Right ventricle myocardium inferior (tissue), 1 donor: ENCODE measurements at regions of chr17 and their contacts with region 1.

Region 1: DNA sequence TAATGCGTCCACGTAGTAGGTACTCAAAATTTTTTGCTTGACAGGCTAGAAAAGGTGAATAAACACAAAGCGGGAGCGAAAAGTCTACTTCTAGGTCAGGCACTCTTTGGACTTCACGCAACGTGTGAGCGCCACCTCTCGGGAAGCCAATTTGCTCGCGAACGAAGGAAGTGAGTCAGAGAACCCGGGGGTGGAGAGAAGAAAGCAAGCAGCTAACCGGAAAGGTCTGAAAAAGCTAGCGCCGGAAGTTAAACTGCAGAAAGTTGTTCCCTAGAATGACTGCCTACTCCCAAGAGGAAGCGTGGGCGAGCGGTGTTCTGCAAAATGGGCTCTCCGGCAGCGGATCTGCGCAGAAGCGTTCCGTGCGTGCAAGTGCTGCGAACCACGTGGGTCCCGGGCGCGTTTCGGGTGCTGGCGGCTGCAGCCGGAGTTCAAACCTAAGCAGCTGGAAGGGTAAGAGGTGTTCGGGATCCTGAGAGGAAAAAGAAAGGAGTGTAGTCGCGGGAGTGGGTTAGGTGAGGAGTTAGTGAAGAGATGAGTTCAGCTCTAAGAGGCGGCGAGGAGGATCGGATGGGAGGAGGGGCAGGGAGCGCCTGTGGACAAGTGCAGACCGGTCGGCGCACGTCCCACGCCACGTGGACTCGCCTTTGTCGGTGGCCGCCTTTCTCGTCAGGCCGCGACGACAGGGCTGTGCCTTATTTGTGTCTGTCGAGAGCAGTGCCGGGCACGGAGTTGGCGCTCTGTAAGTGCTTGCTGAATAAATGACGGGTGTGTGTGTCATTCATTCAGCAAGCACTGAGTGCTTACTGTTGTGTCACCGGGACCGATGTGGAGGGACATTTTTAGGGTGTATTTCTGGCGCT is at the start of gene NME1:
- DNase-seq: peak; percentile 98
- ATAC-seq: peak; percentile 98
- total RNA-seq, gene NME1: 18.8 TPM

Region 2: GRCh38 chr17:50719144-50719923 is 434.1 kb before region 1 on chr17 and contains the start of gene LUC7L3:
- intact Hi-C with region 1: loop called (anchors 10 kb)
- DNase-seq: peak; percentile 98
- ATAC-seq: peak; percentile 98
- total RNA-seq, gene LUC7L3: 49.3 TPM

Region 3: GRCh38 chr17:50919321-50920085 is 233.9 kb before region 1 on chr17:
- intact Hi-C with region 1: no loop called
- DNase-seq: peak; percentile 90
- ATAC-seq: peak; percentile 88

Region 4: DNA sequence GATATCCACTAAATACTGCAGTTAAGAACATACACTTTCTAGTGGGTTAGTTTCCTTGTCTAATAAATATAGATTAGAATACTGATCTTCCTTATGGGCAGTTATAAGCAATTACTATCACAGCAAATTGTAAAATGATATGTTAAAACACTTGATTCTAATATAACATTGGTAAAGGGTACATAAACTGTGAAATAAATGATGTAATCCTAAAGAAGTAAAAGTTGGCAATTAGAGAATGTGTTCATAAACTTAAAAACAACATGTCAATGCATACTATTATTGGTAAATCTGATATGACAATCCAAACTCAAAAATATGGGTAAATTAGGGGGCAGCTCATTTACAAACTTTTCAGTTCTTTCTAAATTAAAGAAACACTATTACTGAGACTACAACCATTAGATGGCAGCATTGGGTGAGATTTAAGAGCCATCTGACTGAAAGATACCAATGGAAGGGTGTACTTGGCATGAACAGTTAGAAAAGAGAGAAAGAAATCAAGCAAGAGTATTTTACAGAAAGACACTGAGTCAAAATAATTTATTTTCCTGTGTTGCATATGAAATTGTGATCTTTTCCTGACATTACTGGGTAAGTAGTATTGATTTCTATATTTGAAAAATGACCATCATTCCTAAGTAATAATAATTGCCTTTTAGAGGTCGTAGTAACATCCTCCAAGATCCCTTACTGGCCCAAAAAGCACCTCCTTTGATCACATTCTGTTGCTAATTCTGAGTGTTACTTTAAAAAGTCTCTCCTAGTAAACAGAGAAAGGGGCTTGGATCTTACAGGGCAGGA is 152.4 kb before region 1 on chr17:
- intact Hi-C with region 1: loop called (anchors 1 kb)
- DNase-seq: no peak
- ATAC-seq: peak; percentile 48

Region 5: DNA sequence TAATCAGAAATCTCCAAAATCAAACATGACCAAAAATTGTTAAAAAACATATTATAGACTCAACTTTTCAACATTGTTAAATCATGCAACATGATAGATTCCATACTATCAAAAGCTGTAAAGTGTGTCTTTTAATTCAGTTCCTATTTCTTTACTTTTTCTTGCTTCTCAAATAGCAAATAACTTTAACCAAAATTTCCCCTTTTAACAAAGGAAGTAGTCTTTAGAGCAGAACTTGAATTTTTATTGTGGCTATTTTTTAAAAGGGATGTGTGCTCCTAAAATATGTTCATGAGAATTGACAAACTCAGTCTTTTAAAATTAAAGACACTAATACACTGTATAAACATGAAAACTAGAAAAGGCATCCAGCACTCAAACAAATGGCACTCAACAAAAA is 81.9 kb before region 1 on chr17:
- intact Hi-C with region 1: no loop called
- DNase-seq: no peak
- ATAC-seq: no peak

Region 6: GRCh38 chr17:51120739-51121617 is 32.5 kb before region 1 on chr17 and contains the start of gene SPAG9:
- intact Hi-C with region 1: loop called (anchors 1 kb)
- DNase-seq: peak; percentile 97
- ATAC-seq: peak; percentile 90
- total RNA-seq, gene SPAG9: 49.4 TPM

Region 7: GRCh38 chr17:51166197-51166986 is 13.0 kb after region 1 on chr17 and contains the start of gene NME2:
- intact Hi-C with region 1: loop called (anchors 1 kb)
- DNase-seq: peak; percentile 97
- ATAC-seq: peak; percentile 98
- total RNA-seq, gene NME2: 278 TPM

Region 8: GRCh38 chr17:52181782-52182181 is 1028.3 kb after region 1 on chr17:
- intact Hi-C with region 1: no loop called
- DNase-seq: no peak
- ATAC-seq: no peak